HepG2 (cell line): ENCODE measurements at regions of chr6 and their contacts with region 1.

Region 1: DNA sequence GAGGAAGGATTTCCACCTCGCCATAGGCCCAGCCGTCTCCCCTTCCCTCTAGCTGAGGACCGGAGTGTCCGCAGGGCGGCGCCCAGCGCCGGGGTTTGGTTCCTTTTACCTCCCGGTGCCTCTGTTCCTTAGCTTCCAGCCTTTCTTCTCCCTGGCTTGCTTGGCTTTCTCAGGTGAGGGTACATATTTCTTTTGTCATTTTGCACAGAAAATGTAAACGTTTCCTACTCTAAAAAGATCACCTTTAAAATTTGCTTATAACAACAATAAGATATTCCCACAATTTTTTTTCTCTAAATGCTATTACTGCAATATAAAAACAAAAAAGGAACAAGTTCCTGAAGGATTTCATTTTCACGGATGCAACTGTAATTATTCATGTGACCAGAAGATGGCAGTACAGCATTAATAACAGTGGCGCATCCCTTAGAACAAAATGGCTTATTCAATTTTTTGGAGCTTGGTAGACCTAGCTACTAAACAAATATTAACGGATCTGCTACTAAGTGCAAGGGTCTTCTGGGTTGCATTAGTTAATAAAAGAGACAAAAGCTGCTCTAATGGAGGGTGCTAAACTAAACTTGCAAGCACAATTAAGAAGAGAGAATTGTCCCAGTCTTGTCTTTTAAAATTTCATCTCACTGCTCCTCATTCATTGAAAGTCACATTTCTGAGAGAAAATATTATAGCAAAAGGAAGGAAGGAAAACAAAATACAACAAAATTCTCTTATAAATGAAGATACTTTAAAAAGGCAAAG is 172.9 kb downstream of the ADGRG6 start:
- DNase-seq: peak; percentile 63
- ATAC-seq: peak; percentile 93
- H3K4me3 ChIP-seq: peak overlapping the region in 2 of 3 experiments; percentile 8 to 26; a peak in 1 of 6 replicates
- H3K27ac ChIP-seq: no peak overlapping the region
- H3K4me1 ChIP-seq: no peaks in the 10 kb centered on the region
- H3K27me3 ChIP-seq: no peaks in the 10 kb centered on the region; a peak in 1 of 5 replicates
- CTCF ChIP-seq: peak; percentile 80
- EP300 ChIP-seq: no peak
- POLR2A ChIP-seq: no peak
- RAD21 ChIP-seq: peak; percentile 76

Region 2: DNA sequence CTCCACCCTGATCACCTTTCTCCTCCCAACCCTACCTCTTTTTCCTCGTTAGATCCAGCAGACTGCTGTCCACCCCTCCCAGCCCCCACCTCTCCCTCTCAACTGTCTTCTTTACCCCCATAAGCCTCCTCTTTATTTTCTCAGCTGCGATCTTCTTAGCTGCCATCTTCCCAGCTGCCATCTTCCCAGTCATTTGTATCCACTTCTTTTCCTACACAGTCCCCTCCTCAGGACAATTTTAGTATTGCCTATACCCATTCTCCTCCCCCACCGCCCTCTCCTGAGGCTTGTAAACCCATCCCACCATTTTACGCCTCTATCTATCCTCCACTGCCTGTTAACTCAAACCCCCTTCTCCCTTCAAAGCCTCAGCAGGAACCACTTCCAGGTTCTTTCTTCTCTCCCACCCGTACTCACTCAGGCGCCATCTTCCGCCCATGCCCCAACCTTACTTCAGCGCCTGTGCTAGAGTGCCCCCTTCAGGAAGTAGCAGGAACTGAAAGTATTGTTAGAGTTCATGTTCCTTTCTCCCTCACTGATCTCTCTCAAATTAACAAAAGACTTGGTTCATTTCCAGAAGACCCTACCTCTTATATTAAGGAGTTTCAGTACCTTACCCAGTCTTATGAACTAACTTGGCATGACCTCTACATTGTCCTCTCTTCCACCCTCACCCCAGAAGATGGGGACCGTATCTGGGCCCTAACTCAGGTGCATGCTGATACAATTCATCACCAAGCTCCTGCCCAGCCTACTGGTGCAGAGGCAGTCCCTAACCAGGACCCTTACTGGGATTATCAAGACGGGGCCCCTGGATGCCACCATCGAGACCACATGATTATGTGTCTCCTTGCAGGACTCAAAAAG is 63.1 kb after region 1 on chr6:
- CTCF ChIA-PET with region 1: interaction called, 7 read pairs
- POLR2A ChIA-PET with region 1: no interaction called
- in situ Hi-C with region 1: no loop called
- intact Hi-C with region 1: loop called (anchors 2 kb)
- DNase-seq: peak; percentile 45
- ATAC-seq: peak; percentile 68
- H3K4me3 ChIP-seq: no peak overlapping the region
- H3K27ac ChIP-seq: no peak overlapping the region
- H3K4me1 ChIP-seq: no peaks in the 10 kb centered on the region
- H3K27me3 ChIP-seq: peaks cover 0 to 39% of the 10 kb centered on the region in 2 experiments; a peak in 4 of 5 replicates
- CTCF ChIP-seq: peak; percentile 80
- EP300 ChIP-seq: no peak
- POLR2A ChIP-seq: no peak
- RAD21 ChIP-seq: peak; percentile 32; the same call in 1 of the 2 replicates

Region 3: DNA sequence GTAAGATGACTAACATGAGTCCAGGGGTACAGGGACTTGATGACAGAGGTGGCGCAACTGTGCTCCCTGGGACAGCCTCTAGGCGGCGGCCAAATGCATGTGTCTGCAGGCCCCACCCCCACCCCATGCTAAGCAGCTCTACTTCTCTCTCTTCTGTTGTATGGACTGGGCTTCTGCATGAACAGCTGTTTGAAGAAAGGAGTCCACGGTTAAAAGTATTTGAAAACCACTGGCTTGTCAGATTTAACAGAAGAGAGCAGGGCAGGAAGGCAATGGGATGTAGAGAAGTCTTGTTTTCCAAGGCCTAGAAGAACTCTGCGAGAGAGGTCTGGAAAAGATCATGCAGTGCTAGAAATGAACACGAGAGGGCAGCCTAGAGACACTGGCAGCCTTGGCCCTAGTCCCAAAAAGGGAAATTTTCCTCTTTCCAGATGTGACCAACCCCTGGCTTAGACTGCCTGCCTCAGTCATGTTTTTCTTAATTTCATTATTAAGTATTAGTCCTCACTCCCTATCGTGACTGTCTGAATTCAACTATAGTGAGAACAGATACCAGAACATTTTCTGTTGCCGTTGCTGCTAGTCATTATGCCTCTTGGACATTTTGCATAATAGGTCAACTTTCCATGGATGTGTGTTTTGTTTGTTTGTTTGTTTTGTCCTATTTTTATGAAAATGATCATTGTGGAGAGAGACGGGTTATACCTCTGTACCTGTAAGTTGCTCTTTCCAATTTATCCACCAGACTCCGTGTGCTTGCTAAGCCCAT is 92.1 kb after region 1 on chr6:
- CTCF ChIA-PET with region 1: interaction called, 9 read pairs
- POLR2A ChIA-PET with region 1: no interaction called
- in situ Hi-C with region 1: no loop called
- intact Hi-C with region 1: loop called (anchors 1 kb)
- DNase-seq: peak; percentile 64
- ATAC-seq: peak; percentile 92
- H3K4me3 ChIP-seq: no peak overlapping the region
- H3K27ac ChIP-seq: no peak overlapping the region
- H3K4me1 ChIP-seq: no peaks in the 10 kb centered on the region
- H3K27me3 ChIP-seq: no peaks in the 10 kb centered on the region; a peak in 2 of 5 replicates
- CTCF ChIP-seq: peak; percentile 87
- EP300 ChIP-seq: no peak
- POLR2A ChIP-seq: no peak
- RAD21 ChIP-seq: peak; percentile 70